Cardiac septum (tissue), 1 donor: ENCODE measurements at regions of chr3 and their contacts with region 1.

Region 1: GRCh38 chr3:111668912-111669488 is 73.9 kb upstream of the ZBED2 start:
- DNase-seq: no peak

Region 2: GRCh38 chr3:111392901-111393351 is 276.1 kb before region 1 on chr3:
- intact Hi-C with region 1: no loop called
- DNase-seq: no peak

Region 3: DNA sequence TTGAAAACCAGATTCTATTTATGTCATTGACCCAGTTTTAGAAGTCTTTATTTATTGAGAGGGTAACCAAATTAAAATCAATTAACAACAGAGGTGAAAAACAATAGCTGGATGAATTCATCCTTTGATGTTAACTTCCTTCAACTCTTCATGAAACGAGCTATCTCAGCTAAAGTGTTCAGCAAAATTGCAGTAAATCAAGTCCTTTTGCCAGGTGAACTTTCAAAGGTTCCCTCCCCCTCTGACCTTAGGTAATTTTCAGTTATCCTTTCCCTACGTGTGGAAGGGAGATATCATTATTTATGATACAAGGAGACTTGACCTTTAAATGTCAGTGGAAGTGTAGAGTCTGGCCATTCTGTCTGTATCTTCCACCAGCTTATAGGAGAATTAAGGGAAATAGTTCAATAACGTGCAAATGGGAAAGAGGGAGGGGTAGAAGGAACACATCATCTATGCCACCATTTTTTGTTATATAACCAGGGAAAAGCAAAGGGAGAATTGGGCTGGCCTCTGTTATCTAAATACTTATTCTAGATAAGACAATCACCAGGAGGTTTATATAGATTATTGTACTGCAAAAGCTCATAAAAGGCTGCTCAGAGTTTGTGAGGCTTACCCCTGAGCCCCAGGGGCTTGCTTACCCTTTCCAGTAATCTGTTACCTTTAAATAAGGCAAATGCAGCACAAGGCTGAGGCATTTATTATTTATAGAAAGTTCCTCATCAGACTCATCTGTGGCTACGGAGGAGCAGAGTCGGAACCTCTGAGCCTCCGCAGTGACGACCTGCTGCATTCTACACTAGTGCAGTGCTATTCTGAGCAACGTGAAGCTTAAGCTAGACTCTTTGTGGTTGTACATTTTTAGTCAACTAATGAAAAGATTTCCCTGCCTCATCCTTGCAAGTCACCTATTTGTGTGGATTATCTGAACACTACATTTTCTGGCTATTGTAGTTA is 23.9 kb after region 1 on chr3:
- intact Hi-C with region 1: loop called (anchors 1 kb)
- DNase-seq: no peak

Region 4: GRCh38 chr3:111717601-111718000 is 48.6 kb after region 1 on chr3:
- intact Hi-C with region 1: loop called (anchors 2 kb)
- DNase-seq: peak; percentile 84

Region 5: GRCh38 chr3:112043603-112044201 is 374.7 kb after region 1 on chr3:
- intact Hi-C with region 1: loop called (anchors 1 kb)
- DNase-seq: no peak